Activated CD4-positive, alpha-beta T cell treated with anti-CD3 and anti-CD28 coated beads for 36 hours (primary cell): ENCODE measurements at regions of chr2 and their contacts with region 1.

Region 1: GRCh38 chr2:60152226-60152833 is 401.1 kb downstream of the BCL11A start:
- DNase-seq: no peak
- ATAC-seq: no peak
- H3K4me3 Mint-ChIP-seq: no peak overlapping the region
- H3K27ac Mint-ChIP-seq: no peak overlapping the region
- H3K4me1 Mint-ChIP-seq: peaks cover 9% of the 10 kb centered on the region
- H3K27me3 Mint-ChIP-seq: peaks cover 2% of the 10 kb centered on the region

Region 2: GRCh38 chr2:58762176-58762781 is 1390.1 kb before region 1 on chr2:
- CTCF ChIA-PET with region 1: no interaction called
- POLR2A ChIA-PET with region 1: no interaction called
- intact Hi-C with region 1: loop called in 1 of 2 experiments (anchors 5 kb)
- DNase-seq: peak; percentile 59
- ATAC-seq: no peak
- H3K4me3 Mint-ChIP-seq: no peak overlapping the region
- H3K27ac Mint-ChIP-seq: no peak overlapping the region
- H3K4me1 Mint-ChIP-seq: peaks cover 3% of the 10 kb centered on the region
- H3K27me3 Mint-ChIP-seq: peaks cover 2% of the 10 kb centered on the region

Region 3: DNA sequence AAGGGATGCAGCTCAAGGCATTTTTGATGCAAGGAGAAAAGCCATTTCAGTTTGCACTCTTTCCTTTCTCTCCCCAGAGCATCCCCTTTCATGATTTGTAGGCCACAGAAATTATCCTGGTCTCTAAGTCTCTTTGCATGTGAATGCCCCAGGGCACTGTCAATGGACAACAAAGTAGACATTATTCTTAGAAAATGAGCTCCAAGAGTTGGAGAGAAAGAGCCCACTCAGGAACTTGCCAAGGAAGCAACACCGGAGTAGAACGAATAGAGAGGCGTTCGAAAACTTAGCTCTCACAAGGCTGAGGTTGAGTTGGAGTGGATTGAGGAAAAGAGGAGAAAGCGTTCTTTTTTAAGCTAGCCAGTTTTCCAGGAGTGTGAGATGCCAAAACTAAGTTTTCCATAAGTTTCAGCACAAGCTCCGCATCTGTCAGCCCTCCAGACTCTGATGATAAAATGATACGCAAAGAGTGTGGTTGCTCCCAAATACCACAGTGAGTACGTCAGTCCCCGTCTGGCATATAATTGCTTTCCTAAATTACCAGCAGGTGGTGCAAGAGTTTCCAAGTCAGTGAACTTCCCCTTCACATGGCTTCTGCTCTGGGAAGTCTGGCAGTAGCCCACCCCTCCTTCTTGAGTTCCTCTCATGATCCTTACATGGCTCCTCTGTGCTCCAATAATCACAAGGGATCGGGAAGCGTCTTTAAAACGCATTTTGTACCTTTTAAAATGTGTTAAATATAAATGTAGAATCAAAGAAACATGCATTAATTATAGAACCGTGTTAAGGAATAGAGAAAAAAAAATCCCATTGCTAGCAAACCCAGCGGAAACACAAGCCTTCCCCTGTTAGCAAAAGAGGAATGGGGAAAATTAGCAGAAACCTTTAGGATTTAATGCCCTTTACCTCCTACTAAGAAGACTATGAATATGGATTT is 850.6 kb before region 1 on chr2:
- CTCF ChIA-PET with region 1: no interaction called
- POLR2A ChIA-PET with region 1: no interaction called
- intact Hi-C with region 1: loop called (anchors 2 to 10 kb)
- DNase-seq: peak; percentile 7
- ATAC-seq: peak; percentile 42
- H3K4me3 Mint-ChIP-seq: no peak overlapping the region
- H3K27ac Mint-ChIP-seq: no peak overlapping the region
- H3K4me1 Mint-ChIP-seq: no peaks in the 10 kb centered on the region
- H3K27me3 Mint-ChIP-seq: no peaks in the 10 kb centered on the region

Region 4: GRCh38 chr2:59567151-59567550 is 585.2 kb before region 1 on chr2:
- CTCF ChIA-PET with region 1: no interaction called
- POLR2A ChIA-PET with region 1: no interaction called
- intact Hi-C with region 1: no loop called
- DNase-seq: no peak
- ATAC-seq: no peak
- H3K4me3 Mint-ChIP-seq: no peak overlapping the region
- H3K27ac Mint-ChIP-seq: no peak overlapping the region
- H3K4me1 Mint-ChIP-seq: no peaks in the 10 kb centered on the region
- H3K27me3 Mint-ChIP-seq: no peaks in the 10 kb centered on the region

Region 5: DNA sequence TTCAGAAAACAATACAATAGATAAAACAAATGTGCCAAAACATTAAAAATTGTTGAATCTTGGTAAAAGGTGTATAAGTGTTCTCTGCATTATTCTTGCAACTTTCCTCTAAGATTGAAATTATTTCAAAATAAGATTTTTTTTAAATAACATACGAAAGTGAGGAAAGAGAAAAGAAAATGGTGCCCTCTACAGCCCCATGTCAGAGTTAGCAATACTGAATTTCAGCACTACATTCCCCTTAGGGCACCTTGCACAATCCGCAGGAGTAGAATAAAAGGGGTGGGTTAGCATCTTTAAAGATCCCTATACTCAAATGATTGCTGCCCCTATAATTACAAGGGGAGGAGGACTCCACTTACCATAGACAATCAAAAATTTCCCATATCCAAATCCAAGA is 32.5 kb before region 1 on chr2:
- CTCF ChIA-PET with region 1: no interaction called
- POLR2A ChIA-PET with region 1: no interaction called
- intact Hi-C with region 1: no loop called
- DNase-seq: no peak
- ATAC-seq: no peak
- H3K4me3 Mint-ChIP-seq: no peak overlapping the region
- H3K27ac Mint-ChIP-seq: no peak overlapping the region
- H3K4me1 Mint-ChIP-seq: no peaks in the 10 kb centered on the region
- H3K27me3 Mint-ChIP-seq: peaks cover 2% of the 10 kb centered on the region

Region 6: DNA sequence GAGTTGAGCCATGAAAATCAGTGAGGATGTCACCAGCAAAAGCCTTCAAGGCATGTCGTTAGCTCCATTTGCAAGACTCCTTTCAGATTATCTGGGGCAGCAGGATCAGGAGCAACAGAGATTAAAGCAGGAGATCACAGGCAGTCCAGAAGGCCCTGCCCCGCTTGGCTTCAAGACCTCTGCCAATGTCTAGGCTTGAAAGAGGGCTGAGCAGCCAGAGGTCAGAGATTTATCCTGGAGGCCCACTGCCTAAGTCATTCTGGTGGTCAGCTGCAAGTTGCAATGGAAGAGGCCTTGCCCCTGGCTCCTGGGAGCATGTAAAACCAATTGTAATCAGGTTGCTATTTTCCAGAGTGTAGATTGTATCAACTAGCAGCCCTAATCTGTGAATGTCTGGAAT is 15.4 kb before region 1 on chr2:
- CTCF ChIA-PET with region 1: no interaction called
- POLR2A ChIA-PET with region 1: no interaction called
- intact Hi-C with region 1: loop called in 1 of 2 experiments (anchors 1 kb)
- DNase-seq: no peak
- ATAC-seq: no peak
- H3K4me3 Mint-ChIP-seq: no peak overlapping the region
- H3K27ac Mint-ChIP-seq: no peak overlapping the region
- H3K4me1 Mint-ChIP-seq: no peaks in the 10 kb centered on the region
- H3K27me3 Mint-ChIP-seq: no peaks in the 10 kb centered on the region